ENCODE measurements at regions of chr13 and their contacts with region 1.

Region 1: DNA sequence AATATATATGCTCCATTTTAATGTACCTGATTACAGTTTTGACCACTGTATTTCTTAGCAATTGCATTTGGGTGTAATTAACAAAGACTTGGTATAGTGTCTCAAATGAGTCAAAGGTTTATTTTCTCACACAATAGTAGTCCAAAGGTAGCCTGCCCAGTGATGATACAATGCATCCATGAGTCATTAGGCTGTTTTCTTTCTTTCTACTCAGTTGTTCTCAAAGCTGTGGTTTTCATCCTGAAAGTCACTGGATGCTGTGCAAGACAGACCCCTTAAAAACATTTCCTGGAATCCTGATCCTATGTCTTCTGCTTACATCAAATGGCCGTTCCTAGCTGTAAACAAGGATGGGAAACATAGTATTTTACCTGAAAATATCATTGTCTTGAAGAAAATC is 651.2 kb upstream of the MIR17HG start:
- DNase-seq: no peak
- ATAC-seq: no peak
- H3K4me3 ChIP-seq: no peak overlapping the region
- H3K27ac ChIP-seq: no peak overlapping the region
- H3K4me1 ChIP-seq: peaks cover 0 to under 1% (median 0%) of the 10 kb centered on the region in 12 donors
- H3K27me3 ChIP-seq: no peaks in the 10 kb centered on the region
- CTCF ChIP-seq: no peak
- POLR2A ChIP-seq: no peak

Region 2: GRCh38 chr13:90673746-90674145 is 22.5 kb before region 1 on chr13:
- intact Hi-C with region 1: loop called in 1 of 10 experiments (anchors 2 kb)
- DNase-seq: no peak
- ATAC-seq: no peak
- H3K4me3 ChIP-seq: no peak overlapping the region
- H3K27ac ChIP-seq: no peak overlapping the region
- H3K4me1 ChIP-seq: no peaks in the 10 kb centered on the region
- H3K27me3 ChIP-seq: no peaks in the 10 kb centered on the region
- CTCF ChIP-seq: no peak
- POLR2A ChIP-seq: no peak